Activated CD4-positive, alpha-beta T cell treated with anti-CD3 and anti-CD28 coated beads for 36 hours (primary cell): ENCODE measurements at regions of chr1 and their contacts with region 1.

Region 1: GRCh38 chr1:150259758-150260669 is 2.4 kb downstream of the CA14 start:
- DNase-seq: no peak
- ATAC-seq: no peak
- H3K4me3 Mint-ChIP-seq: no peak overlapping the region
- H3K27ac Mint-ChIP-seq: no peak overlapping the region
- H3K4me1 Mint-ChIP-seq: peaks cover 11% of the 10 kb centered on the region
- H3K27me3 Mint-ChIP-seq: peaks cover 26% of the 10 kb centered on the region

Region 2: DNA sequence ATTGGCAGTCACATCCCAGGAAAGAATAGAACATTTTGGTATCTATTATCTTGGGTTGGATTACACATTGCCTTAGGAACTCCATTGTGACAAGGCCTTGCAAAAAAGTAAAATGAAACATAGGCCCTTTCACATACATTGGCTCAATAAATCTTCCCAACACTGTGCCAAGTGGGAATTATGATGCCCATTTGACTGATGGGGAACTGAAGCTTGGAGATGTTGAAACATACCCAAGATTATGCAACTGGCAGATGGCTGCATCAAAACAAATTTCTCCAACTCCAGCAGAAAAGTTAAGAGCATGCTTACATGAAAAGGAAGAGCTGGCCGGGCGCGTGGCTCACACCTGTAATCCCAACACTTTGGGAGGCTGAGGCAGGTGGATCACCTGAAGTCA is 83.4 kb before region 1 on chr1:
- CTCF ChIA-PET with region 1: no interaction called
- POLR2A ChIA-PET with region 1: no interaction called
- intact Hi-C with region 1: no loop called
- DNase-seq: no peak
- ATAC-seq: no peak
- H3K4me3 Mint-ChIP-seq: no peak overlapping the region
- H3K27ac Mint-ChIP-seq: no peak overlapping the region
- H3K4me1 Mint-ChIP-seq: no peaks in the 10 kb centered on the region
- H3K27me3 Mint-ChIP-seq: no peaks in the 10 kb centered on the region

Region 3: DNA sequence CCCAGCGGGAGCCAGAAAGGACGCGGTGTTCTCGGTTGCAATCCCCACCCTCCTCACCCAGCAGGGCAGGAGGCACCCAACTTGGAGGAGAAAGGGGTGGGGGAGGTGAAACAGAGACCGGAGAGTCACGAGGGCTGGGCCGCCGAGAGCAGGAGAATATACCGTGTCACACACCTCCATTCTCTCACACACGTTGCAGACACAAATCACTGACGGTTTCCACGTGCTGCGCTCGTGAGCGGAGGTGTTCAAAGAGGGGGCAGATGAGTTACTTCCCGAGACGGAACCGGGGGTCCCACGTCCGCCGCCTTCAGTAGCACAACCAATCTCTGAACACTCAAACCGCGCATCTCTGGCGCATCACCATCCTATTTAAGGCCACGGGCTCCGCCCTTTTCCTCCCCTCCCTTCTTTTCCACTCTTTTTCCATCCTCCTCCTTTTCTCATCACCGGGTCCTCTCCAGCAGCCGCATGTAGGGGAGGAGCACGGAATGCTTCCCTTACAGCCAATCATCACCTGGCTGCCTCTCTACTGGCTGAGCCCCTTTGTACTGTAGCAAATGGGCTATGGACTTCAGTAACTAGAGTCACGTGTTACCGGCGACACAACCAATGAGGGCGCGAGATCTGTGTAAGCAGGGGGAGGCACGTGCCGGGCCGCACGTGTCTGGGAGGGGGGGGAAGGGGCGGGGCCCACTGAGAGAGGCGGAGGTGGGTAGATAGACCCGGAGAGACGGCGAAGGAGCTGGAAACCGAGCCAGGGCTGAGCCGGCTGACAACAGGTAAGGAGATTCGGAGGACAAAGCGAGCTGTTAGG is 22.0 kb after region 1 on chr1 and contains the start of gene CIART:
- CTCF ChIA-PET with region 1: interaction called, 23 read pairs
- POLR2A ChIA-PET with region 1: no interaction called
- intact Hi-C with region 1: loop called (anchors 1 kb)
- DNase-seq: peak; percentile 89
- ATAC-seq: peak; percentile 96
- H3K4me3 Mint-ChIP-seq: peak within 1 kb of the TSS; percentile 77
- H3K27ac Mint-ChIP-seq: peak within 1 kb of the TSS; percentile 92
- H3K4me1 Mint-ChIP-seq: peaks cover 29% of the 10 kb centered on the region
- H3K27me3 Mint-ChIP-seq: no peaks in the 10 kb centered on the region
- total RNA-seq, gene CIART: 5.9 to 6.0 TPM

Region 4: DNA sequence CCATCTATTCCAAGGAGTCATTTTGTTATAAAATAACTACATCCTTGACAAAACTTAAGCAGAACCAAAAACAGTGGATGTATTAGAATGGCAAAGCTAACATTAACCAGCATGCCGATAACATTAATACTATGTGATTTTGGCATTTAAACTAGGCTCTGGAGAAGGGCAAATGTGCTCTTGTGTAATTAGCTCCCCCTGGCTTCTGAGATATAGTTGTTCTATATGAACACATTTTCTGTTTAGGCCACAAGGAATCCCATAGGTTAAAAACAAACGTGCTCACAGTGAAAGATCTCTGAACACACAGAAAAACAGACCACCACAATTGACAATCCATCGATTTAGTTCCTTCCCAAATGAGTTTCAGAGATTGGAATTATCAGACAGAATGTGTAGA is 169.8 kb after region 1 on chr1:
- CTCF ChIA-PET with region 1: no interaction called
- POLR2A ChIA-PET with region 1: no interaction called
- intact Hi-C with region 1: loop called (anchors 10 kb)
- DNase-seq: no peak
- ATAC-seq: peak; percentile 60
- H3K4me3 Mint-ChIP-seq: no peak overlapping the region
- H3K27ac Mint-ChIP-seq: peak overlapping the region; percentile 16
- H3K4me1 Mint-ChIP-seq: peaks cover 7% of the 10 kb centered on the region
- H3K27me3 Mint-ChIP-seq: no peaks in the 10 kb centered on the region

Region 5: DNA sequence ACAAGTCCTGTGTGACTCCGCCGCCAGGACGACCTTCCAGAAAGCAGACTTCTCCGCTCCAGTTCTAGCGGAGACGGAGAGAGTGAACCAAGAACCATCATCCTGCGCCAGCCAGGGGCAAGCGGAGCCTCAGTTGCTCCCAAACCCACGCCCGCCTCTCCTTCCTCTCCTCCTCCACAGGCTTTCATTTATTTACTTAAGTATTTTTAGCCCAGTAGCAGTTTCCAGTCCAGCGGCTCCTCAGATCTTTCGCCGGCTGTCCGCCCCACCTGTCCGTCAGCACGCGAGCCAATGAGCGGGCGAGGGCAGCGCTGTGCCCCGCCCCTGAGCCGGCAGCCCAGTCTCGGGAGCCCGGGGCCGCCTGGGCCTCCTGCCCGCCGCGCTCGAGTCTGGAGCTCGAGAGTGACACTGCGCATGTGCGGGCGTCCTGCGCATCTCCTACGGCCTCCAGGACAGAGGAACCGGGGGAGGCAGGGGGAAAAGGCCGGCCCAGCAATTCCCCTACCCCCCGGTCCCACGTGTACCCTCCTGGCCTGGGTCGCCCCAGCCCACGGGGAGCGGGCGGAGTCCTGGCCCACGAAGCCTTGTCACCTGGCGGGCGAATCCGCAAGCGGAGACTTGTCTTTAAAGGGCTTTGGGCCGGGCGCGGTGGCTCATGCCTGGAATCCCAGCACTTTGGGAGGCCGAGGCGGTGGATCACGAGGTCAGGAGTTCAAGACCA is 255.5 kb after region 1 on chr1 and contains the start of gene FALEC:
- CTCF ChIA-PET with region 1: interaction called, 20 read pairs
- POLR2A ChIA-PET with region 1: no interaction called
- intact Hi-C with region 1: loop called in 1 of 2 experiments (anchors 1 kb)
- DNase-seq: peak; percentile 95
- ATAC-seq: peak; percentile 99
- H3K4me3 Mint-ChIP-seq: peak within 1 kb of the TSS; percentile 80
- H3K27ac Mint-ChIP-seq: peak within 1 kb of the TSS; percentile 59
- H3K4me1 Mint-ChIP-seq: peaks cover 10% of the 10 kb centered on the region
- H3K27me3 Mint-ChIP-seq: no peaks in the 10 kb centered on the region
- total RNA-seq, gene FALEC: 0.34 TPM in 1 of 2 experiments, not detected in the other

Region 6: DNA sequence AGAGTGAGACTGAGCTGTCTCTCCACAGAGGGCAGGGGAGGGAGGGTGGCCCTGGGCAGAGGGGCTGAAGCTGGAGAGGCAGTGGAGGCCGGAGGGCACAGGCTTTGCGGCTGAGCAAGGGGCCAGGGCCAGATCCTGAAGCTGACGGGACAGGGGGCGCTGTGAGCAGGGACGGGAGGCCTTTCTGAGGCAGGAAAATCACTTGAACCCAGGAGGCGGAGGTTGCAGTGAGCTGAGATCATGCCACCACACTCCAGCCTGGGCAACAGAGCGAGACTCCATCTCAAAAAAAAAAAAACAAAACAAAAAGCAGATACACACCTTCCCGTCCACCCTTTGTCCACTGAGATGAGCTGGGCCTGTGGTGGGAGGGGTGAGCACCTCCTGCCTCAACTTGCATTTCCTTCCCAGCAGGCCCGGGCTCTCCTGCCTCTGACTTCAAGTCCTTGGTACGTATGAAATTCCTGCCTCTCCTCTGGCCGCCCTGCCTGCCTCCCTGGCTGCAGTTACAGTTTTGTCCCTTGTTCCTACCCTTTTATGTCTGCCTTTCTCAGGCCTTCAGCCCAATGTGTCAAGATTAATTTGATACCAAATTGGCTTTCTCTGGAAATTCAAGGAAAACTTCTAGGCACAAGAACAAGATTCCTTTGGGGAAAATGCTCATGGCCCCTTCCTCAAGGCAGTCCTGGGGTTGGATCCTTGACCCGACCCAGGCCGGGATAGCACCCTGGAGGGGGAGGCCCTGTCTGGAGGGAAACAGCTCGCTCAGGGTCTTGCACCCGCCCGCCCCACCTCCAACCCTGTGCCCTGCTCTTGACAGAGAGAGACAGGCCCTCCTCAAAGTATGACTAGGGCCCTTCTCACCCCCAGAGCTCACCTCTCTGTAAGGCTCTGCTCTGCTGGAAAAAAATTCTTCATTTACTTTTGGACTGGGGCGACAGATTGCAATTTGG is 278.0 kb after region 1 on chr1:
- CTCF ChIA-PET with region 1: interaction called, 7 read pairs
- POLR2A ChIA-PET with region 1: no interaction called
- intact Hi-C with region 1: loop called in 1 of 2 experiments (anchors 10 kb)
- DNase-seq: no peak
- ATAC-seq: no peak
- H3K4me3 Mint-ChIP-seq: no peak overlapping the region
- H3K27ac Mint-ChIP-seq: no peak overlapping the region
- H3K4me1 Mint-ChIP-seq: no peaks in the 10 kb centered on the region
- H3K27me3 Mint-ChIP-seq: no peaks in the 10 kb centered on the region